PC-3 (cell line): ENCODE measurements at regions of chr3 and their contacts with region 1.

Region 1: DNA sequence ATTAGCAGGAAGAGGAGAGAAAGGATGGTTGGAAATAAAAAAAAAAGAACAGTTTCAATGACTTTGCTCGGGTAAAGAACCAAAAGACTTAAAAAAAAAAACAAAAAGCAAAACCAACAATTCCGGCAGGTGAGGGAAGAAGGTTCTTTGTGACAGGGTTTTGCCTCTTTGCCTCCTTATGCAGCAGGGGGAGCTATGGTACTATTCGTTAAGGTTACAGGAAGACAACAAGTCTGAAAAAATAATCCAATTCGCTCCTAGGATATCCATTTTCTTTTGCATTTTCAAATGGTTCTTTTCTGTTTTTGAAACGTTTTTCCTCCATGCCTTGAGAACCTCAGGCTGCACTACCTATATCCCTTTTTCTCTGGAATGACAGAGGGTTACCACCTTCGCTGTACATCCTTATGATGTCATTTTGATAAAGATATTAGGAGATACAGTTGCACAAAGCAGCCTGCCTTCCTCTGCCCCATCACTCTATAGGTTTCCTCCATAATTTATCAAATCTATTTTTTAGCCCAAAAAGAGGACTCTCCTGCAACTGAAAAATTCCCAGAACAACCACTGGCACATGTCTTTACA is 55.0 kb downstream of the CFAP20DC start:
- DNase-seq: peak; percentile 83
- ATAC-seq: peak; percentile 18; the same call in 1 of the 2 replicates
- H3K4me3 ChIP-seq: no peak overlapping the region; the same call in 1 of the 2 replicates
- H3K27ac ChIP-seq: peak overlapping the region; percentile 19; the same call in 1 of the 2 replicates
- H3K4me1 ChIP-seq: peaks cover 19% of the 10 kb centered on the region
- H3K27me3 ChIP-seq: no peaks in the 10 kb centered on the region
- CTCF ChIP-seq: peak; percentile 94

Region 2: DNA sequence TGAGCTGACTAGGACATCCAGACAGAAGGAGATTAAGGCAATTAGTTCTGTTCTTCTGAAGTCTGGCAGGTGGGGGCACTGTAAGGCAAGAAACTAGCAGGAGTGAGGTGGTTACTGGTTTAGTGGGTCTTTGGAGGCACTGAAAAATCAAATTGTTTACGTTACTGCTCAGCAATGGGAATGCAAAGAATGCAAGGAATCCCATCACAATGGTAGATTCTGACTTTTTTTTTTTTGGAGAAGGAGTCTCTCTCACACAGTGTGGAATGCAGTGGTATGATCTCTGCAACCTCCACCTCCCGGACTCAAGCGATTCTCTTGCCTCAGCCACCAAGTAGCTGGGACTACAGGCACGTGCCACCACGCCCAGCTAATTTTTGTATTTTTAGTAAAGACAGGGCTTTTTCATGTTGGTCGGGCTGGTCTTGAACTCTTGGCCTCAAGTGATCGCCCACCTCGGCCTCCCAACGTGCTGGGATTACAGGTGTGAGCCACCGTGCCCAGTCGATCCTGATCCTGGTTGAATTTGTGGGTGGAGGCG is 434.0 kb before region 1 on chr3:
- CTCF ChIA-PET with region 1: no interaction called
- POLR2A ChIA-PET with region 1: no interaction called
- intact Hi-C with region 1: loop called (anchors 5 kb)
- DNase-seq: peak; percentile 94
- ATAC-seq: peak; percentile 49
- H3K4me3 ChIP-seq: no peak overlapping the region
- H3K27ac ChIP-seq: peak overlapping the region; percentile 44
- H3K4me1 ChIP-seq: peaks cover 42% of the 10 kb centered on the region
- H3K27me3 ChIP-seq: no peaks in the 10 kb centered on the region
- CTCF ChIP-seq: peak; percentile 81

Region 3: DNA sequence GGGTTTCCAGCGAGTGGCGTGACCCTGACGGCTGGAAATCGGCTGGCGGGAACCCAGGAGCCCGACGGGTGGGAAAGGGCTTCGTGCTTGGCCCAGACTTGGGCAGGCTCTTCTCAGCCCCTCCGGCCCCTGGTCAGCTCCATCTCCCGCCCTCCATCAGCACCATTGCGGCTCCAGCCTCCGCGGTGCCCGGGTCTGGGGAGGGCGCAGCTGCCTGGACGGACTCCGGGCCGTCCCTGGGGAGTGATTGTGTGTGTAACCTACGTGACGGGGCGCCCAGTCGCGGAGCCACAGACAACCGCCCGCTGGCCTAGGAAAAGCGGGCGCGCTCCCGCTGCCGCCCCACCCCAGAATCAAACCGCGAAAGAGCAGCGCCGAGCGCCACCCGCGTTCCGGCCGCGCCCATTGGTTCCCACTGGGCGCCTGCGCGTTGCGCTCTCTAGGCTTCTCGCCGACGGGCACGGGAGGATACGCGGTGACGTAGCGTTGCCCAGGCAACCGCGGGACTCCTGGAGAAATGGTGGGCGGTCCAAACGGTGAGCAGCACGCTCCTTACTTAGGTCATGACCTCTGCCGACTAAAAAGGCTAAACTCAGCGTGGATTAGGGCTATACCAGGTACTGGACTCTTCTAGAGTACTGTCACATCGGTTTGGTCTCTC is 55.0 kb after region 1 on chr3 and contains the start of gene CFAP20DC:
- CTCF ChIA-PET with region 1: interaction called, 14 read pairs
- POLR2A ChIA-PET with region 1: interaction called, 4 read pairs
- intact Hi-C with region 1: loop called (anchors 1 kb)
- DNase-seq: peak; percentile 98
- ATAC-seq: peak; percentile 94
- H3K4me3 ChIP-seq: peak within 1 kb of the TSS; percentile 77
- H3K27ac ChIP-seq: peak within 1 kb of the TSS; percentile 64
- H3K4me1 ChIP-seq: peaks cover 34% of the 10 kb centered on the region
- H3K27me3 ChIP-seq: no peaks in the 10 kb centered on the region
- CTCF ChIP-seq: no peak
- total RNA-seq, gene CFAP20DC: 13.8 and 15.4 TPM in 2 replicates

Region 4: DNA sequence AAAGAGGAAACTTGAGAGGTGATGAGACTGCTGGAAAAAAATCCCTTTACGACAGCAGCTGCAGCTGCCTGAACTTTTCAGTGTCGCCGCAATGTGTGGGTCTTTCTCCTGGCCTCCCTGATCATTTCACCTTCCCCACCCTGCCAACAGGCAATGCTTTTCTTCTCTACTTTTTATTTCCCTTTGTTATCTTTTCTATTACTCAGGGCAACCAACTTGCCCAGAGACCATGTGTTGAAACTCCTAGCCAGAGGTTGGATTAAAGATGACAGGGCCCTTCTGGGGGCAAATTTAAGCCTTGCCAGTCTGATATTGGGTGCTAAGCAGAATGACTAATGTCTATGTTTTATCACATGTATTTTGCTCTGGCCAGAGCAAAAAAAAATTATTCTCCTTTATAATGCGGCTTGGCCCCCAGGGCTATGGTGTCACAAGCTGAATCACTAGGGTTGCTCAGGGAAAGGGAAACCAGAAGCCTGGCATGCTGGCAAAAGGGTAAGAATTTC is 106.4 kb after region 1 on chr3:
- CTCF ChIA-PET with region 1: no interaction called
- POLR2A ChIA-PET with region 1: no interaction called
- intact Hi-C with region 1: no loop called
- DNase-seq: peak; percentile 94
- ATAC-seq: peak; percentile 79
- H3K4me3 ChIP-seq: no peak overlapping the region
- H3K27ac ChIP-seq: peak overlapping the region; percentile 81
- H3K4me1 ChIP-seq: peaks cover 32% of the 10 kb centered on the region
- H3K27me3 ChIP-seq: no peaks in the 10 kb centered on the region
- CTCF ChIP-seq: no peak

Region 5: GRCh38 chr3:59127071-59127470 is 132.2 kb after region 1 on chr3:
- CTCF ChIA-PET with region 1: no interaction called
- POLR2A ChIA-PET with region 1: no interaction called
- intact Hi-C with region 1: loop called (anchors 5 kb)
- DNase-seq: peak; percentile 77
- ATAC-seq: peak; percentile 98
- H3K4me3 ChIP-seq: no peak overlapping the region
- H3K27ac ChIP-seq: peak overlapping the region; percentile 82
- H3K4me1 ChIP-seq: peaks cover 17% of the 10 kb centered on the region
- H3K27me3 ChIP-seq: no peaks in the 10 kb centered on the region
- CTCF ChIP-seq: no peak

Region 6: GRCh38 chr3:59212128-59212779 is 217.4 kb after region 1 on chr3:
- CTCF ChIA-PET with region 1: no interaction called
- POLR2A ChIA-PET with region 1: no interaction called
- intact Hi-C with region 1: loop called (anchors 1 kb)
- DNase-seq: peak; percentile 86
- ATAC-seq: peak; percentile 94
- H3K4me3 ChIP-seq: no peak overlapping the region
- H3K27ac ChIP-seq: peak overlapping the region; percentile 17
- H3K4me1 ChIP-seq: peaks cover 8% of the 10 kb centered on the region
- H3K27me3 ChIP-seq: no peaks in the 10 kb centered on the region
- CTCF ChIP-seq: peak; percentile 90

Region 7: DNA sequence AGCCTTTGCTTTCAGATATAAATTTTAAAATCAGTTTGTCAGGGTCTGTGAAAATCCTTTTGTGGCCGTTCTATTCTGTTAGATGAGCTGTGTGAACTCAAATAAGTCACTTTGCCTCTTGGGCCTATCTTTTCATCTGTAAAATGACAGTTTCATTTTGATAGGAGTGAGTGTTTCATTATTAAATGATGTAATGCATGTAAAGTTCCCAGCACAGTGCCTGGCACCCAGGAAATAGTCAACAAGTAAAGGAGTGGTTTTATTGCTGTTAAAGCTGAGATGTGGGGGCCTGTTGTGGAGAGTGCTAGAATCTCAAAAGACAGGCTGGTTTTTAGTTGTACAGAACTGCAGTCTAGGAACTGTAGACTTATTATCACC is 449.4 kb after region 1 on chr3:
- CTCF ChIA-PET with region 1: no interaction called
- POLR2A ChIA-PET with region 1: no interaction called
- intact Hi-C with region 1: loop called (anchors 10 kb)
- DNase-seq: no peak
- ATAC-seq: no peak
- H3K4me3 ChIP-seq: no peak overlapping the region
- H3K27ac ChIP-seq: no peak overlapping the region
- H3K4me1 ChIP-seq: peaks cover 15% of the 10 kb centered on the region
- H3K27me3 ChIP-seq: no peaks in the 10 kb centered on the region
- CTCF ChIP-seq: no peak

Region 8: GRCh38 chr3:59818033-59818920 is 823.4 kb after region 1 on chr3:
- CTCF ChIA-PET with region 1: no interaction called
- POLR2A ChIA-PET with region 1: no interaction called
- intact Hi-C with region 1: loop called (anchors 2 kb)
- DNase-seq: peak; percentile 96
- ATAC-seq: peak; percentile 86
- H3K4me3 ChIP-seq: peak overlapping the region; percentile 62
- H3K27ac ChIP-seq: peak overlapping the region; percentile 98
- H3K4me1 ChIP-seq: peaks cover 53% of the 10 kb centered on the region
- H3K27me3 ChIP-seq: no peaks in the 10 kb centered on the region
- CTCF ChIP-seq: no peak